Activated T-helper 2 cell treated with anti-CD3 and anti-CD28 coated beads, Interferon-gamma antibody, Interleukin-2, Interleukin-4, amounts not matched to agents 10 μg/mL and 5 μg/mL and 100 μg/mL, durations not matched to agents 14 hours and 24 hours and 36 hours (primary cell): ENCODE measurements at regions of chr17 and their contacts with region 1.

Region 1: DNA sequence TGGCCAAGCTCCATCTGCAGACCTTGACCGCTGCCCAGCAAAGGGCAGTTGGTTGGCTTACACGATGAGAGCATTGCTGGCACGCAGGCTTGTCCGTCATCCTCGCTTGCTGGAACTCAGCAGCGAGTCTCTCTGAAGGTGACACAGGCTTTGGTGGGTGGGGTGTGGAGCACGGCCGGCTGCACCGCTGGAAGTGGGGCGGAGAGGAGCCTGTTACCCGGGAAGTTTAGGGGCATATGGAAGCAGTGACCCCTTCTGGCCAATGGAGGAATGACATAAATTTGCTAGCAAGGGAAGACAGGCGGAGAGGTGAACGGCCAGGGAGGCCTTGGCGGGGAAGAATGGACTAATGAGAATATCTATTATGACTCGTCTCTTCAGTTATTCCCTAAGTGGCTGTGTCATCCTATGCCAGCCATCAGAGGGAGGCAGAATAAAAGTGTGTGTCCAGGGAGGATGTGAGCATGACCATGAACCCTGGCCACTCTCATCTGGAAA is 65.9 kb upstream of the SDK2 start:
- DNase-seq: peak; percentile 45
- H3K4me3 Mint-ChIP-seq: no peak overlapping the region
- H3K27ac Mint-ChIP-seq: no peak overlapping the region
- H3K4me1 Mint-ChIP-seq: peaks cover 1% of the 10 kb centered on the region
- H3K27me3 Mint-ChIP-seq: no peaks in the 10 kb centered on the region

Region 2: GRCh38 chr17:73429440-73430164 is 280.5 kb before region 1 on chr17:
- intact Hi-C with region 1: loop called (anchors 1 kb)
- DNase-seq: peak; percentile 71
- H3K4me3 Mint-ChIP-seq: no peak overlapping the region
- H3K27ac Mint-ChIP-seq: no peak overlapping the region
- H3K4me1 Mint-ChIP-seq: peaks cover 4% of the 10 kb centered on the region
- H3K27me3 Mint-ChIP-seq: peaks cover 4% of the 10 kb centered on the region

Region 3: GRCh38 chr17:73566905-73567782 is 143.0 kb before region 1 on chr17:
- intact Hi-C with region 1: no loop called
- DNase-seq: no peak
- H3K4me3 Mint-ChIP-seq: no peak overlapping the region
- H3K27ac Mint-ChIP-seq: no peak overlapping the region
- H3K4me1 Mint-ChIP-seq: peaks cover 7% of the 10 kb centered on the region
- H3K27me3 Mint-ChIP-seq: no peaks in the 10 kb centered on the region

Region 4: DNA sequence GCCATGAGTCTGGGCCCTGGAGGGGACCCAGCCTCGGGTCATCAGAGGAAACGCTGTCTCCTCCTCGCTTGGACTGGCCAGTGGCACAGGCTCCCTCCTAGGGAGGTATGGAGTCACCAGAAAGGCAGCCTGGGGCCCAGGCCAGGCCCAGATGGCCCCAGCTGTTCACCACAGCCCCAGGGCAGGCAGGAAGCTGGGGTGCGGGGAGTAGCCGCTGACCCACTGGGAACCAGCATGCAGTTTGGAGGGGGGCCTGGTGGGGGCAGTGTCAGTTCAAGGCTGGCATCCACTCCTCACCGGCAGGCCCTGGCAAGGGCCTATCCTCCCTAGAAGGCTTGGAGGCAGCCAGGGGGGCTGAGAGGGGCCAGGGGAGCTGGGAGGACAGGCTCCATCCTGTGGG is 114.7 kb before region 1 on chr17:
- intact Hi-C with region 1: loop called (anchors 10 kb)
- DNase-seq: no peak
- H3K4me3 Mint-ChIP-seq: no peak overlapping the region
- H3K27ac Mint-ChIP-seq: no peak overlapping the region
- H3K4me1 Mint-ChIP-seq: peaks cover 24% of the 10 kb centered on the region
- H3K27me3 Mint-ChIP-seq: no peaks in the 10 kb centered on the region

Region 5: GRCh38 chr17:73645050-73645978 is 64.8 kb before region 1 on chr17:
- intact Hi-C with region 1: loop called (anchors 5 kb)
- DNase-seq: no peak
- H3K4me3 Mint-ChIP-seq: peak overlapping the region; percentile 39
- H3K27ac Mint-ChIP-seq: no peak overlapping the region
- H3K4me1 Mint-ChIP-seq: peaks cover 5% of the 10 kb centered on the region
- H3K27me3 Mint-ChIP-seq: peaks cover 68% of the 10 kb centered on the region